Cardiac septum (tissue), 1 donor: ENCODE measurements at regions of chr5 and their contacts with region 1.

Region 1: GRCh38 chr5:95858661-95859326 is 36.3 kb upstream of the GLRX start:
- DNase-seq: peak; percentile 95

Region 2: GRCh38 chr5:95817440-95817839 is 41.4 kb before region 1 on chr5:
- intact Hi-C with region 1: no loop called
- DNase-seq: peak; percentile 80

Region 3: DNA sequence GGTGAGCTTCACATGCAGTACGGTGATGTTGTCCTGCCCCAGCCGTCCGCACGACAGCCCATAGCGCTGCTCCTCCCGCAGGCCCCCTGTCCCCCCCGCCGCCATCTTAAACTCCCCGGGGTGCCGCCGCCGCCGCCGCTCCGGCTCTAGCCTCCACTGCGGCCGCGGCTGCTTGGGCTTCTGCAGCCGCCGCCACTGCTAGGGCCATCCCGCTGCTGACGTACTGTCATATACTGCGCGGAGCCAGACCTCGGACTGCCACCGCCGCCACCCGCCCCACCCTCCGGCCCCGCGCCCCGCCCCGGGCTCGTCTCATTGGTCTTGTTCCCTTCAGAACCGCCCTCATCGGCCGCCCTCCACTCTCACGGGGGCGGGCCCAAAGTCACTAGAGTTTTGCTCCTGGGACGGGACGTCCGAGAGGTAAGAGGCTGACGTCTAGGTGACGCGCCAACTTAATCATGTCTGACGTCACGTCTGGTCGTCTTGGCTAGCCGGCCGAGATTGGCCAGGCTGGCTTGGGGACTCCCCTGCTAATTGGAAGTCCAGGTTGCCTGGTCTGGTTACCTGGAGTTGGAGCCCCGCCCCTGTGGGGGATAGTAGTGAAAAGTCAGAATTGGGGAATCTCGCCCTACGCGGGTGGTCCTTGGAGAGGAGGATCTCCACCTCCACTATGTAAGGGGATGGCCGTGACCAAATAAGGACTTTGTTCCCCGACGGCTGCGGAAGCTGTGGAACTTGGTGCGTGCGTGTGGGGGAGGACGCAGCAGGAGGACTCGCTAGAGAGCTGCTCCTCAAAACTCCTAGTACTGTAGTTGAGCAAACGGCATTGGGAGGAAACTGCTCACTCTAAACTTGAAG is 103.1 kb after region 1 on chr5 and contains the start of gene ELL2:
- intact Hi-C with region 1: loop called (anchors 1 kb)
- DNase-seq: peak; percentile 99
- total RNA-seq, gene ELL2: 30.5 TPM

Region 4: GRCh38 chr5:96125231-96125891 is 266.6 kb after region 1 on chr5:
- intact Hi-C with region 1: loop called (anchors 10 kb)
- DNase-seq: no peak

Region 5: DNA sequence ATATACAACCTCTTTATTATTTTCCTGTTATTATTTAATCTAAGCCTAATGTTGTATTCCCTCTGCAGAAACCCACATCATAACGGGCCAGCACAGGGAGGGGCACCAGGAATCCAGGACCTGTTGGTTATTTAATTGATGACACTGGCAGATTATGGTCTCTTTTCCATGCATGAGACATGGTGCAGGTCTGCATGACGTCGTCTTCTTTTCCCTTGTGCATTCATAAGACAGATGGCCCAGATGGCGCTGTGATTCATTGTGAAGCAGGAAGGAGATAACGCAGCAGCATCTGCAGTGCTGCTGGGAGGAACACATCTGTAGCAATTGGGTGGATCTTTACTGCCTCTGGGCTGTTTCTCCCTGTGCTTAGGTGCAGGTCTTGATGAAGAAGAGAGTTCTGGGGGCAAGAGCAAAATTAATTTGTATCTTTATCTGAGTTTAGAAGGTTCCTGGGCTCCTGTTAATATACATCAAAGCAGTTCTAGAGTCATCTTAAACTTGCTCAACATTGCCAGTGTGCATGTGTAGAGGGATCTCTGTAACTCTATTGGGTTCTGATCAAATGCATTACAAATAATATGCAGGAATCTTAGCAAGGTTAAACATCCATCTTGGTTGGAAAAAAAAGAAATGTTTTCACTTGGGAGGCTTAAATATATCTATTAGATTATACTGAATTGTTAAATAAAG is 398.1 kb after region 1 on chr5:
- intact Hi-C with region 1: loop called (anchors 10 kb)
- DNase-seq: no peak

Region 6: GRCh38 chr5:96384353-96384752 is 525.6 kb after region 1 on chr5:
- intact Hi-C with region 1: loop called (anchors 5 kb)
- DNase-seq: peak; percentile 87

Region 7: GRCh38 chr5:96601811-96602244 is 743.0 kb after region 1 on chr5:
- intact Hi-C with region 1: loop called (anchors 5 kb)
- DNase-seq: no peak